Endothelial cell of umbilical vein (primary cell): ENCODE measurements at regions of chr6 and their contacts with region 1.

Region 1: GRCh38 chr6:31087494-31088089 is 24.8 kb downstream of the C6orf15 start:
- DNase-seq: peak; percentile 93
- H3K4me3 ChIP-seq: peak overlapping the region in 1 of 3 experiments; percentile 42
- H3K27ac ChIP-seq: peak overlapping the region; percentile 84
- H3K4me1 ChIP-seq: peaks cover 12% of the 10 kb centered on the region
- H3K27me3 ChIP-seq: no peaks in the 10 kb centered on the region
- CTCF ChIP-seq: peak; percentile 72 to 74
- POLR2A ChIP-seq: no peak

Region 2: DNA sequence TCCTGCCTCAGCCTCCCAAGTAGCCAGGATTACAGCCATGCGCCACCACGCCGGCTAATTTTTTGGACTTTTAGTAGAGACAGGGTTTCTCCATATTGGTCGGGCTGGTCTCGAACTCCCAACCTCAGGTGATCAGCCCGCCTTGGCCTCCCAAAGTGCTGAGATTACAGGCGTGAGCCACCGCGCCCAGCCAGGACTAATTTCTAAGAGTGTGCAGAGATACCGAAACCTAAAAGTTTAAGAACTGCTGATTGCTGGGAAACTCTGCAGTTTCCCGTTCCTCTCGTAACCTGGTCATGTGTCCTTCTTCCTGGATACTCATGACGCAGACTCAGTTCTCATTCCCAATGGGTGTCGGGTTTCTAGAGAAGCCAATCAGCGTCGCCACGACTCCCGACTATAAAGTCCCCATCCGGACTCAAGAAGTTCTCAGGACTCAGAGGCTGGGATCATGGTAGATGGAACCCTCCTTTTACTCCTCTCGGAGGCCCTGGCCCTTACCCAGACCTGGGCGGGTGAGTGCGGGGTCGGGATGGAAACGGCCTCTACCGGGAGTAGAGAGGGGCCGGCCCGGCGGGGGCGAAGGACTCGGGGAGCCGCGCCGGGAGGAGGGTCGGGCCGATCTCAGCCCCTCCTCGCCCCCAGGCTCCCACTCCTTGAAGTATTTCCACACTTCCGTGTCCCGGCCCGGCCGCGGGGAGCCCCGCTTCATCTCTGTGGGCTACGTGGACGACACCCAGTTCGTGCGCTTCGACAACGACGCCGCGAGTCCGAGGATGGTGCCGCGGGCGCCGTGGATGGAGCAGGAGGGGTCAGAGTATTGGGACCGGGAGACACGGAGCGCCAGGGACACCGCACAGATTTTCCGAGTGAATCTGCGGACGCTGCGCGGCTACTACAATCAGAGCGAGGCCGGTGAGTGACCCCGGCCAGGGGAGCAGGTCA is 598.2 kb before region 1 on chr6 and contains the start of gene HLA-E:
- CTCF ChIA-PET with region 1: interaction called, 4 read pairs
- POLR2A ChIA-PET with region 1: no interaction called
- dilution Hi-C with region 1: no loop called
- intact Hi-C with region 1: loop called (anchors 10 kb)
- DNase-seq: peak; percentile 99
- H3K4me3 ChIP-seq: peak within 1 kb of the TSS; percentile 76 to 94 (median 92)
- H3K27ac ChIP-seq: peak within 1 kb of the TSS; percentile 92
- H3K4me1 ChIP-seq: peaks cover 20% of the 10 kb centered on the region
- H3K27me3 ChIP-seq: no peaks in the 10 kb centered on the region
- CTCF ChIP-seq: no peak
- POLR2A ChIP-seq: peak; percentile 99
- total RNA-seq, gene HLA-E: 249 and 271 TPM in 2 replicates

Region 3: DNA sequence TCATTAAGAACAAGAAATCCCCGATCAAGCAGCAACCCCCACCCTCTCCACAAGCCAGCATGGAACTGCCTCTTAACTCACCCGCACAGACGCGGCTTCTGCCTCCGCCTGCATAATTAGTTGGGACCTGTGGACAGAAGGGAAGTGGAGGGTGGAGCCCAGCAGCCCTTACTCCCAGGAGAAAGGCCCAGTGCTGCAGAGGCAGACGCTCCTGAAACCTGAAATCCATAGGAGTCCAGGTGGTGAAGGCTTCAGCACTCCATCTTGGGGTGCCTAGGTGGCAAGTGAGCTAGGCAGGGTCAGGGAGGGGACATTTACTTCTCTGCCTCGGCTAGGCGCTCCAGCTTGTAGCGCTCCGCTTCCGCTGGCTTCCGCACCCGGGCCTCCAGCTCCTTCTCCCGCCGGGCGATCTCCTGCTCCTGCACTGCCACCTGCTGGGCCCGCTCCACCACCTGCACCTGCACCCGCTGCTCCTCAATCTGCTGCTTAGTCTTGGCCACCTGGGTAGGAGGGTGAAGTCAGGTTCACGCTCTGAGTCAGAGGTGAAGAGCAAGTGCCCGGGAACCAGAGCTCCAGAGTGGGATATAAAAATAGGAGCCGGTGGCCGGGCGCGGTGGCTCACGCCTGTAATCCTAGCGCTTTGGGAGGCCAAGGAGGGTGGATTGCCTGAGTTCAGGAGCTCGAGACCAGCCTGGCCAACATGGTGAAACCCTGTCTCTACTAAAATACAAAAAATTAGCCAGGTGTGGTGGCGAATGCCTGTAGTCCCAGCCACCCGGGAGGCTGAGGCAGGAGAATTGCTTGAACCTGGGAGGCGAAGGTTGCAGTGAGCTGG is 356.8 kb before region 1 on chr6:
- CTCF ChIA-PET with region 1: interaction called, 23 read pairs
- POLR2A ChIA-PET with region 1: no interaction called
- dilution Hi-C with region 1: no loop called
- intact Hi-C with region 1: no loop called
- DNase-seq: peak; percentile 83
- H3K4me3 ChIP-seq: no peak overlapping the region
- H3K27ac ChIP-seq: no peak overlapping the region
- H3K4me1 ChIP-seq: peaks cover 2% of the 10 kb centered on the region
- H3K27me3 ChIP-seq: no peaks in the 10 kb centered on the region
- CTCF ChIP-seq: peak; percentile 75 to 85
- POLR2A ChIP-seq: no peak

Region 4: DNA sequence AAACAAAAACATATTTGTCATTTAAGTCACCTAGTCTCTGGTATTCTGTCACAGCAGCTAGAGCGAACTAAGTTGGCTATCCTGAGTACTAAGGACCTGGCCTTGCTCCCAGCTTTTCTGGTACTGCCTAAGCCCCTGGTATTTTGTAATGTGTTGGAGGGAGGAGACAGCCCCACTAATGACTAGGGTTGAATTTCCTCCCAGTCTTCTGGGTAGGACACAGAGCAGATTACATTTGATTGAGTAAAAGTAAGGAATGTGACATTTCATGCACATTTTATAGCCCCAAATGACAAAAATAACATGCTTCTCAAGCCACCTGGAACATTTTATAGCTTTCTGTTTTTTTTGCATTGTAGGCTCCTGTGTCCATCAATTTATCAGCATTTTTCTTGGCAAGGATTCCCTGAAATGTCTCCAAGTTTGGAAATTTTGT is 251.1 kb before region 1 on chr6:
- CTCF ChIA-PET with region 1: interaction called, 10 read pairs
- POLR2A ChIA-PET with region 1: no interaction called
- dilution Hi-C with region 1: no loop called
- intact Hi-C with region 1: no loop called
- DNase-seq: peak; percentile 15
- H3K4me3 ChIP-seq: no peak overlapping the region
- H3K27ac ChIP-seq: no peak overlapping the region
- H3K4me1 ChIP-seq: no peaks in the 10 kb centered on the region
- H3K27me3 ChIP-seq: peaks cover 4 to 10% of the 10 kb centered on the region in 2 experiments
- CTCF ChIP-seq: no peak
- POLR2A ChIP-seq: no peak

Region 5: GRCh38 chr6:30914076-30914853 is 173.3 kb before region 1 on chr6 and contains the start of gene VARS2:
- CTCF ChIA-PET with region 1: interaction called, 142 read pairs
- POLR2A ChIA-PET with region 1: no interaction called
- dilution Hi-C with region 1: no loop called
- intact Hi-C with region 1: loop called (anchors 1 kb)
- DNase-seq: peak; percentile 95
- H3K4me3 ChIP-seq: peak within 1 kb of the TSS; percentile 37 to 54 (median 44)
- H3K27ac ChIP-seq: peak within 1 kb of the TSS; percentile 67
- H3K4me1 ChIP-seq: peaks cover 25% of the 10 kb centered on the region
- H3K27me3 ChIP-seq: no peaks in the 10 kb centered on the region
- CTCF ChIP-seq: peak in 1 of 2 donors; percentile 41
- POLR2A ChIP-seq: peak; percentile 91
- total RNA-seq, gene VARS2: 32.5 and 34.3 TPM in 2 replicates

Region 6: GRCh38 chr6:31103136-31103535 is 15.5 kb after region 1 on chr6:
- CTCF ChIA-PET with region 1: interaction called, 14 read pairs
- POLR2A ChIA-PET with region 1: interaction called, 3 read pairs
- dilution Hi-C with region 1: no loop called
- intact Hi-C with region 1: no loop called
- DNase-seq: no peak
- H3K4me3 ChIP-seq: no peak overlapping the region
- H3K27ac ChIP-seq: no peak overlapping the region
- H3K4me1 ChIP-seq: no peaks in the 10 kb centered on the region
- H3K27me3 ChIP-seq: peaks cover 0 to 3% of the 10 kb centered on the region in 2 experiments
- CTCF ChIP-seq: no peak
- POLR2A ChIP-seq: no peak

Region 7: DNA sequence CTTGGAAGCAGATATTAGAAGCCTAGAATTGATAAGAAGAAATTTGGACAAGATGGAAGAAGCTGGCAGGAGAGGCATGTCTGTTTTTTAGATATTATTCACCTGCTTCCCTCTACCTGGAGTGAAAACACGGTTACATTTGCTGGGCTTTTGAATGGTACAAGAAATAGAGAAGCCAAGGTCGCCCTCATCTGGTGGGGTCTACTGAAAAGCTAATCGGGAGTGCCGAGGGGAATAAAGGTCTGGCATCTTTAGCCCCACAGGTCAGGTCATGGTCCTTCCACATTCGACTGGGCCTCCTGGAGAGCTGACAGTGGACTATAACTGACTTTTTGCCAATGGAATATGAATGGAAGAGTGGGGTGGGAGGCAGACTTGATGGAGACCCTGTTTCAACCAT is 835.4 kb after region 1 on chr6:
- CTCF ChIA-PET with region 1: no interaction called
- POLR2A ChIA-PET with region 1: no interaction called
- dilution Hi-C with region 1: no loop called
- intact Hi-C with region 1: no loop called
- DNase-seq: no peak
- H3K4me3 ChIP-seq: no peak overlapping the region
- H3K27ac ChIP-seq: no peak overlapping the region
- H3K4me1 ChIP-seq: no peaks in the 10 kb centered on the region
- H3K27me3 ChIP-seq: peaks cover 5 to 8% of the 10 kb centered on the region in 2 experiments
- CTCF ChIP-seq: peak in 1 of 2 donors; percentile 5
- POLR2A ChIP-seq: no peak